B cell (primary cell): ENCODE measurements at regions of chr12 and their contacts with region 1.

Region 1: GRCh38 chr12:2812290-2813213 is at the start of gene ITFG2:
- DNase-seq: peak; percentile 99
- ATAC-seq: peak; percentile 94
- H3K4me3 ChIP-seq: peak within 1 kb of the TSS; percentile 56 to 99 (median 87)
- H3K4me3 Mint-ChIP-seq: peak within 1 kb of the TSS; percentile 100
- H3K27ac ChIP-seq: peak within 1 kb of the TSS; percentile 79 to 90
- H3K27ac Mint-ChIP-seq: peak within 1 kb of the TSS; percentile 99
- H3K4me1 ChIP-seq: peaks cover 14 to 16% of the 10 kb centered on the region in 2 donors
- H3K4me1 Mint-ChIP-seq: peaks cover 32% of the 10 kb centered on the region
- H3K27me3 ChIP-seq: no peaks in the 10 kb centered on the region
- H3K27me3 Mint-ChIP-seq: no peaks in the 10 kb centered on the region
- CTCF ChIP-seq: no peak
- total RNA-seq, gene ITFG2: 137 and 145 TPM in 2 replicates

Region 2: GRCh38 chr12:1804545-1805332 is 1007.8 kb before region 1 on chr12:
- CTCF ChIA-PET with region 1: no interaction called
- POLR2A ChIA-PET with region 1: no interaction called
- intact Hi-C with region 1: loop called (anchors 5 kb)
- DNase-seq: peak; percentile 89
- ATAC-seq: peak; percentile 78
- H3K4me3 ChIP-seq: peak overlapping the region in 1 of 5 experiments; percentile 21
- H3K4me3 Mint-ChIP-seq: peak overlapping the region; percentile 54
- H3K27ac ChIP-seq: peak overlapping the region in 1 of 2 donors; percentile 33
- H3K27ac Mint-ChIP-seq: peak overlapping the region; percentile 69
- H3K4me1 ChIP-seq: peaks cover 5 to 23% of the 10 kb centered on the region in 2 donors
- H3K4me1 Mint-ChIP-seq: peaks cover 25% of the 10 kb centered on the region
- H3K27me3 ChIP-seq: no peaks in the 10 kb centered on the region
- H3K27me3 Mint-ChIP-seq: no peaks in the 10 kb centered on the region
- CTCF ChIP-seq: no peak

Region 3: GRCh38 chr12:2691006-2691344 is 121.6 kb before region 1 on chr12:
- CTCF ChIA-PET with region 1: no interaction called
- POLR2A ChIA-PET with region 1: no interaction called
- intact Hi-C with region 1: loop called (anchors 2 kb)
- DNase-seq: peak; percentile 66
- ATAC-seq: peak; percentile 75
- H3K4me3 ChIP-seq: peak overlapping the region; percentile 42 to 78 (median 72)
- H3K4me3 Mint-ChIP-seq: peak overlapping the region; percentile 93
- H3K27ac ChIP-seq: peak overlapping the region in 1 of 2 donors; percentile 66
- H3K27ac Mint-ChIP-seq: peak overlapping the region; percentile 76
- H3K4me1 ChIP-seq: peaks cover 10 to 16% of the 10 kb centered on the region in 2 donors
- H3K4me1 Mint-ChIP-seq: peaks cover 29% of the 10 kb centered on the region
- H3K27me3 ChIP-seq: peaks cover 0 to 5% (median 2%) of the 10 kb centered on the region in 4 experiments
- H3K27me3 Mint-ChIP-seq: peaks cover 26% of the 10 kb centered on the region
- CTCF ChIP-seq: no peak

Region 4: GRCh38 chr12:2783936-2784600 is 28.5 kb before region 1 on chr12:
- CTCF ChIA-PET with region 1: interaction called, 11 read pairs
- POLR2A ChIA-PET with region 1: no interaction called
- intact Hi-C with region 1: no loop called
- DNase-seq: peak; percentile 66
- ATAC-seq: peak; percentile 84
- H3K4me3 ChIP-seq: peak overlapping the region in 4 of 5 experiments; percentile 20 to 50 (median 38)
- H3K4me3 Mint-ChIP-seq: peak overlapping the region; percentile 90
- H3K27ac ChIP-seq: no peak overlapping the region
- H3K27ac Mint-ChIP-seq: no peak overlapping the region
- H3K4me1 ChIP-seq: peaks cover 6 to 8% of the 10 kb centered on the region in 2 donors
- H3K4me1 Mint-ChIP-seq: peaks cover 13% of the 10 kb centered on the region
- H3K27me3 ChIP-seq: peaks cover 0 to 16% (median 2%) of the 10 kb centered on the region in 4 experiments
- H3K27me3 Mint-ChIP-seq: peaks cover 21% of the 10 kb centered on the region
- CTCF ChIP-seq: peak; percentile 97

Region 5: DNA sequence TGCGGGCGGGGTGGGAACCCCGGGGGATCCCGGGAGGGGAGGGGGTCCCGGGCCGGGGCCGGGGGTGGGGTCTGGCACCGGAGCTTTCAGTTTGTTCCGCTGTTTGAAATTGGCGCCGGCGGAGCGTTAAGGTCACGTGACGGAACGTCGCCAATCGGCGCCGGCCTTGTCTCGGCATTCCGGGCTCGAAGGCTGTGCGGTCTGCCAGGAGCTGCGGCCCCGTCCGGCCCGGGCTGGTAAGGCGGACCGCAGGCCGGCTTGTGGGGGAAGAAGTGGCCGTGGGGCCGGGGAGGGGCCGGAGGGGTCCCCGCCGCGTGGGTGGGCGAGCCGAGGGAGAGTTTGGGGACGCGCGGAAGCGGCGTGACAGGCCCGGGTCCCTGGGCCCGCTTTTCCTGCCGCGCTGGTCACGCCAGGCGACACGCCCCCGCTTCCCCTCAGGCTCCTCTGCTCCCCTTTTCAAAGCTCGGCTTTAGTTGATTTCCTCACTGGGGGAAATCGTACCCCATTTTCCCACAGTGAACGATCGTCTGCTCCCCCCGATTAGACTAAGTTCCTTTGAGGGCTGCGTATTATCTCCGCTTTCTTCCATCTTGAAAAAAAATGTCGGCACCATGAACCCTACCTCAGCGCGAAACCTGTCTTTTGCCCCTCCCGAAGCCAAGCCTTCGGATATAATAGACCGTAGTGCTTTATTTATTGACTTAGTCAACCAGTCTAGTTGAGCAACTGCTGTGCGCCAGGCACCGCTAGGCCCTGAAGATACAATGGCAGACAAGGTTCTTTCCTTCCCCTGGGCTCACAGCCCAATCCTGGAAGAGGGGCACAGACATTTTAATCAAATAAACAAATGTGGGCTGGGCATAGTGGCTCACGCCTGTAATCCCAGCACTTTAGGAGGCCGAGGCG is 64.7 kb after region 1 on chr12 and contains the starts of genes FOXM1 and RHNO1:
- CTCF ChIA-PET with region 1: interaction called, 3 read pairs
- POLR2A ChIA-PET with region 1: interaction called, 4 read pairs
- intact Hi-C with region 1: loop called (anchors 1 kb)
- DNase-seq: peak; percentile 90
- ATAC-seq: peak; percentile 79
- H3K4me3 ChIP-seq: peak within 1 kb of the TSS; percentile 81 to 98 (median 88)
- H3K4me3 Mint-ChIP-seq: peak within 1 kb of the TSS; percentile 97
- H3K27ac ChIP-seq: peak within 1 kb of the TSS; percentile 90 to 91
- H3K27ac Mint-ChIP-seq: peak within 1 kb of the TSS; percentile 96
- H3K4me1 ChIP-seq: peaks cover 17 to 23% of the 10 kb centered on the region in 2 donors
- H3K4me1 Mint-ChIP-seq: peaks cover 30% of the 10 kb centered on the region
- H3K27me3 ChIP-seq: no peaks in the 10 kb centered on the region
- H3K27me3 Mint-ChIP-seq: no peaks in the 10 kb centered on the region
- CTCF ChIP-seq: no peak
- total RNA-seq, gene FOXM1: 0.51 and 0.84 TPM in 2 replicates
- total RNA-seq, gene RHNO1: 13.5 and 15.0 TPM in 2 replicates

Region 6: DNA sequence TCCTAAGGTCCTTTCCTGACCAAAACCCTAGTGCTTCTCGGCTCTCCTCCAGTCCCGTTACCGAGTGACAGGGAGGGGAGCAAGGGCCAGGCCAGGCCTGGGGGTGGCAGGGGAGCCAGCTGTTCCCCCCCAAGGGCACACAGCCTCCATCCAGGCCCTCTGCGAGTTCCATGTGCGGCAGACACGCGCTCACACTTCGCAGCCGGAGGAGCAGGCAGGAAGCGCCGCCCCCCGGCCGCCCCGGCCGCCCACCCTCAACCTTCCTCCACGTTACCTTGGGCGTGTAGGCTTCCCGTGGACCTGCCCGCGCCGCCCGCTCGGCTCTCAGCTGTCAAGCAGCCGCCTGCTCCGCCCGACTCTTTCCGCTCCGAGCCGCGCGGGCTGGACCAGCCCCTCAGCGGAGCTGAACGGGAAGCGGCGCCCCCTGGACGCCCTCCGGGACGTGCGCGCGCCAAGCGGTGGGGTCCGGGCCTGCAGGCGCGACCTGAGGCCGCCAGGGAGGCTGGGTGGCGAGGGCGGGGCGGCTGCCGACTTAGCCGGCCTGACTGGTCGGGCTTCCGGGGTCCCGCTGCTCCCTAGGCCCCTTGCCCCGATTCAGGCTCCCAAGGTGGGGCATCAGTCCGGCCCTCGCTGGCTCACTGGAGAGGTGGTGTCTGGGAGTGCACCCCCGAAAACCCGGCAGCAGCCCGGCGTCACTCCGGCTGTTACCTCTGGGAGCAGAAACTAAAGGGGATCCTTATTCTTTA is 940.4 kb after region 1 on chr12 and contains the start of gene CRACR2A:
- CTCF ChIA-PET with region 1: no interaction called
- POLR2A ChIA-PET with region 1: no interaction called
- intact Hi-C with region 1: loop called (anchors 2 kb)
- DNase-seq: peak; percentile 89
- ATAC-seq: peak; percentile 88
- H3K4me3 ChIP-seq: peak within 1 kb of the TSS; percentile 68 to 98 (median 82)
- H3K4me3 Mint-ChIP-seq: peak within 1 kb of the TSS; percentile 92
- H3K27ac ChIP-seq: peak within 1 kb of the TSS; percentile 92 to 95
- H3K27ac Mint-ChIP-seq: peak within 1 kb of the TSS; percentile 91
- H3K4me1 ChIP-seq: peaks cover 20 to 29% of the 10 kb centered on the region in 2 donors
- H3K4me1 Mint-ChIP-seq: peaks cover 34% of the 10 kb centered on the region
- H3K27me3 ChIP-seq: no peaks in the 10 kb centered on the region
- H3K27me3 Mint-ChIP-seq: no peaks in the 10 kb centered on the region
- CTCF ChIP-seq: peak; percentile 86
- total RNA-seq, gene CRACR2A: 26.1 and 26.8 TPM in 2 replicates